Activated CD4-positive, alpha-beta T cell treated with anti-CD3 and anti-CD28 coated beads, Interleukin-2, amount 10 ng/mL, durations not matched to agents 24 days and 14 days (primary cell): ENCODE measurements at regions of chr6 and their contacts with region 1.

Region 1: GRCh38 chr6:135145063-135145800 is 35.9 kb upstream of the MYB start:
- DNase-seq: peak; percentile 80
- H3K4me3 Mint-ChIP-seq: peak overlapping the region; percentile 72
- H3K27ac Mint-ChIP-seq: peak overlapping the region; percentile 86
- H3K4me1 Mint-ChIP-seq: peaks cover 54% of the 10 kb centered on the region
- H3K27me3 Mint-ChIP-seq: no peaks in the 10 kb centered on the region

Region 2: DNA sequence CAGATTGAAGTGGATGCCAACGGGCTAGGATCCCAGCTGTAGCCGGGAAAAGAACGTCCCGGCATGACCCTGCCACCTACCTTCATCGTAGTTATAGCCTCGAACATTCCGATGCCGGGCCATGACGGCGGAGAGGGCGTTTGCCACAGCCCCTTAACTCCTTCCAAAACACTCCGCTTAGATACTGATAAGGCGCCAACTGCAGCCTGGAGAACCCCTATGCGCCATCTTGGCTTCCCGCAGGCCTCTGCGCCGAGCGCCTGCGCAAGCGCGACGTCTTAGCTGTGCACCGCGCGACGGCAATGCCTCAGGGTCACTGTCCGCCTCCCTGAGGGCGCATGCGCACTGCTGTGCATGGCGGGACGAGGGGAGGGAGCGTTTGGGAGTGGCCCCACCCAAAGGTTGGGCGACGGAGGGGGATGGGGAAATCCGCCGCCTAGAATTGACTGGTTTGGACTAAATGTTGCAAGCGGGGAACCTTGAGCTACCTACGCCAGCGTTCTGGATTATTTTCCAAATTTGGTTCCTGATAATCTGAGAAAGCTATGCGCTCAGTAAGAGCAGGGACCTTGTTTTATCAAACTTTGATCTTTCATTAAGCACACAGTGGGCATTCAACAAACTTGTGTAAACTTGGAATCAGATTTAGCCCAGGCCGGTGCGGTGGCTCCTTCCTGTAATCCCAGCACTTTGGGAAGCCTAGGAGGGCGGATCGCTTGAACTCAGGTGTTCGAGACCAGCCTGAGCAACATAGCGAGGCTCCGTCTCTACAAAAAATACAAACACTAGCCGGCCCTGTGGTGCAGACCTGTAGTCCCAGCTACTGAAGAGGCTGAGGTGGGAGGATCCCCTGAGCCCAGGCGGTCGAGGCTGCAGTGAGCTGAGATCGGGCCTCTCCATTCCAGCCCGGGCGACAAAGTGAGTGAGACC is 90.4 kb before region 1 on chr6 and contains the start of gene HBS1L:
- intact Hi-C with region 1: loop called (anchors 1 kb)
- DNase-seq: peak; percentile 99
- H3K4me3 Mint-ChIP-seq: peak within 1 kb of the TSS; percentile 92
- H3K27ac Mint-ChIP-seq: peak within 1 kb of the TSS; percentile 94
- H3K4me1 Mint-ChIP-seq: peaks cover 32% of the 10 kb centered on the region
- H3K27me3 Mint-ChIP-seq: no peaks in the 10 kb centered on the region
- total RNA-seq, gene HBS1L: 94.4 and 104 TPM in 2 replicates

Region 3: DNA sequence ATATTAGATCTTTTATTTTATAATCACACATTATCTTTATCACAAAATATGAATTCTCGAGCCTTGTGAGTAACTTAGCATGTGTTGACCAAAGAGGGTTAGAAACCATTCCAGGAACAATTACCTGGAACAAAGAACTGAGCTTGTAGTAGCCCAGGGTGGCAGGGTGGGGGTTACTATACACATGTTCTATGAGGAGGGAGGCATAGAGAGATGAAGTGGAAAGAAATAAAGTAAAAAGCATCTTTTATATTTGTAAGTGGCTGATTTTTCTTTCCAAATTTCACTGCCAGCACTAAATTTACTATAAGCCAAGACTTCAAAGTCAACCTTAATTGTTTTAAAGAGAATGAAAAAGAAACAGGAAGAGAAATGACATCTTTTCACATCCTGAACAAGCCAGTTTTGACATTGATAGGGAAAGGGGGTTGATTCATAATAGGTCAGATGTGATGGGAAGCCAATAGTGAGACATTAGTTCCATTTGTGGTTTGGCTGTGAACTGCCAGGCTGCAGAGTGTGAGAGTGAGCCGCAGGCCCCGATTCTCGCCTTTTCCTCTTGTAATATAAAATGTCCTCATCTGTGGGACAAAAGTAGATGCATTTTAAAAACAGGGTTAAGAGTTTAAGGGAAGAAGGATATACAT is 16.8 kb before region 1 on chr6:
- intact Hi-C with region 1: loop called (anchors 1 kb)
- DNase-seq: peak; percentile 86
- H3K4me3 Mint-ChIP-seq: peak overlapping the region; percentile 73
- H3K27ac Mint-ChIP-seq: peak overlapping the region; percentile 91
- H3K4me1 Mint-ChIP-seq: peaks cover 42% of the 10 kb centered on the region
- H3K27me3 Mint-ChIP-seq: no peaks in the 10 kb centered on the region

Region 4: GRCh38 chr6:135162678-135163439 is 17.6 kb after region 1 on chr6:
- intact Hi-C with region 1: loop called (anchors 1 kb)
- DNase-seq: peak; percentile 75
- H3K4me3 Mint-ChIP-seq: peak overlapping the region; percentile 61
- H3K27ac Mint-ChIP-seq: peak overlapping the region; percentile 93
- H3K4me1 Mint-ChIP-seq: peaks cover 47% of the 10 kb centered on the region
- H3K27me3 Mint-ChIP-seq: no peaks in the 10 kb centered on the region

Region 5: DNA sequence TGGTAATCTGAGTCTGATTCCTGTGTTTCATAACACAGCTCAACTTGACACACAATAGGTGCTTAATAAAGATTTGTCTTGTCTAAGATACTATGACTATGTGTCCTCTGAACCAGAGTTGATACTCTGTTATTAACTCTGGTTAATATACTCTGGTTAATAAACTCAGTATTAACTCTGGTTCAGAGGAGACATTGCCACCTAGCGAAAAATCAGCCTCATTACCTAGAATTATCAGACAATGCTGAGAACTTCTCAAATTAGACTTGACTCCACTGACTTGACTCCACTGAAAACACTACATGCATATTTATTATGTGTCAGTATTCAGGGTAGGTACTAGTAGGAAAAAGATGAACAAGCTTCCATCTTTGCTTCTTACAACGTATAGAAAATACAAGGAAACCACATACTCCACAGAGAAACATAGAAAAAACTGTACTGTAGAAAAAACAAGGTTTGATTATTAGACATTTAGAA is 278.5 kb after region 1 on chr6:
- intact Hi-C with region 1: loop called (anchors 5 kb)
- DNase-seq: peak; percentile 61
- H3K4me3 Mint-ChIP-seq: no peak overlapping the region
- H3K27ac Mint-ChIP-seq: peak overlapping the region; percentile 77
- H3K4me1 Mint-ChIP-seq: peaks cover 8% of the 10 kb centered on the region
- H3K27me3 Mint-ChIP-seq: no peaks in the 10 kb centered on the region